Mammary epithelial cell (primary cell): ENCODE measurements at regions of chr6 and their contacts with region 1.

Region 1: GRCh38 chr6:144582939-144583613 is 297.9 kb downstream of the UTRN start:
- DNase-seq: no peak
- H3K4me3 ChIP-seq: no peak overlapping the region
- H3K27ac ChIP-seq: no peak overlapping the region
- H3K4me1 ChIP-seq: no peaks in the 10 kb centered on the region
- H3K27me3 ChIP-seq: no peaks in the 10 kb centered on the region
- CTCF ChIP-seq: no peak

Region 2: DNA sequence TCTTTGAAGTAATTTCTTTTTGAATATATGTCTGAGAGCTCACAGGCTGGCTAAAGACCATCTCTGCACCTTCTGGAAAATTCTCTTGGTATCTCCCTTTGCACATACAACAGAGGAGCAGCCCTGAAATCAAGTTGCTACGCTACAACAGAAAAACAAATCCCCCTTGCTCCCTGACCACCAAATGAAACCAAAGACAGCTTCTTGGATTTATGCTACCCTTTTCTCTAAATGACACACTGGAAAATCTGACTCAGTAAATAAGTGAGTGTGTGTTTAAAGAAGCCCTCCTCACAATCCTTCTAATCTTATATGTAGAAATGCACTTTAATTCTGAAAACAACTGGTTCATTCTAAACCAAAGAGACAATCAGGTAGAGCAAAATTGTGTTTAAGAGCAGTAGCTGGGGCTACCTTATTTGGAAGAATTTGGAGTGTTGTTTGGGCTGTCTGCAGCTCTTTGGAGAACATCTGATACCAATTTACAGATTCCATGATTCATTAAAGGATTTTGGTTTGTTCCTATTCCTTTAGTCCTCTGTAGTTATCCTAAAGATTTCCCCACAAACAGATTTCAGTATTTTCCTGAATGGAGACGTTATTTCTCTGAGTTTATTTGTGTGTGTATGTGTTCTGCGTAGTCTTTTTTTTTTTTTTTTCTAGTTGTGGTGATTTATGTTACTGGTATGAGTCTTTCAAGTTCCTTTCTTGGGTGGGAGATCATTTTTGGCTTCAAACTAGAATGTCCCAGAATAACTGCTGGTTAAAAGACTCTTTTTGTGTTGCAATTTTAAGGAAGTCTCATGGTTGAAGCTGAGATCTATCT is 334.4 kb before region 1 on chr6:
- CTCF ChIA-PET with region 1: no interaction called
- dilution Hi-C with region 1: no loop called
- in situ Hi-C with region 1: no loop called
- intact Hi-C with region 1: no loop called
- DNase-seq: no peak
- H3K4me3 ChIP-seq: no peak overlapping the region
- H3K27ac ChIP-seq: no peak overlapping the region
- H3K4me1 ChIP-seq: no peaks in the 10 kb centered on the region
- H3K27me3 ChIP-seq: no peaks in the 10 kb centered on the region
- CTCF ChIP-seq: no peak

Region 3: GRCh38 chr6:144778773-144779492 is 195.9 kb after region 1 on chr6:
- CTCF ChIA-PET with region 1: no interaction called
- dilution Hi-C with region 1: no loop called
- in situ Hi-C with region 1: no loop called
- intact Hi-C with region 1: loop called (anchors 2 kb)
- DNase-seq: peak; percentile 6
- H3K4me3 ChIP-seq: no peak overlapping the region
- H3K27ac ChIP-seq: no peak overlapping the region
- H3K4me1 ChIP-seq: no peaks in the 10 kb centered on the region
- H3K27me3 ChIP-seq: no peaks in the 10 kb centered on the region
- CTCF ChIP-seq: peak; percentile 17 to 53

Region 4: GRCh38 chr6:145015739-145016558 is 432.9 kb after region 1 on chr6:
- CTCF ChIA-PET with region 1: no interaction called
- dilution Hi-C with region 1: no loop called
- in situ Hi-C with region 1: loop called in 1 of 2 experiments (anchors 25 kb)
- intact Hi-C with region 1: no loop called
- DNase-seq: peak; percentile 86
- H3K4me3 ChIP-seq: no peak overlapping the region
- H3K27ac ChIP-seq: no peak overlapping the region
- H3K4me1 ChIP-seq: peaks cover 12% of the 10 kb centered on the region
- H3K27me3 ChIP-seq: no peaks in the 10 kb centered on the region
- CTCF ChIP-seq: no peak

Region 5: GRCh38 chr6:145137426-145137825 is 554.4 kb after region 1 on chr6:
- CTCF ChIA-PET with region 1: interaction called, 3 read pairs
- dilution Hi-C with region 1: no loop called
- in situ Hi-C with region 1: loop called in 1 of 2 experiments (anchors 10 kb)
- intact Hi-C with region 1: loop called (anchors 1 kb)
- DNase-seq: no peak
- H3K4me3 ChIP-seq: no peak overlapping the region
- H3K27ac ChIP-seq: no peak overlapping the region
- H3K4me1 ChIP-seq: no peaks in the 10 kb centered on the region
- H3K27me3 ChIP-seq: peaks cover 2% of the 10 kb centered on the region
- CTCF ChIP-seq: peak; percentile 21 to 44

Region 6: GRCh38 chr6:145633981-145634627 is 1051.0 kb after region 1 on chr6:
- CTCF ChIA-PET with region 1: no interaction called
- dilution Hi-C with region 1: no loop called
- in situ Hi-C with region 1: loop called (anchors 25 kb)
- intact Hi-C with region 1: no loop called
- DNase-seq: peak; percentile 45
- H3K4me3 ChIP-seq: no peak overlapping the region
- H3K27ac ChIP-seq: no peak overlapping the region
- H3K4me1 ChIP-seq: no peaks in the 10 kb centered on the region
- H3K27me3 ChIP-seq: no peaks in the 10 kb centered on the region
- CTCF ChIP-seq: peak; percentile 86